Vagina (tissue), 2 donors: ENCODE measurements at regions of chr6 and their contacts with region 1.

Region 1: DNA sequence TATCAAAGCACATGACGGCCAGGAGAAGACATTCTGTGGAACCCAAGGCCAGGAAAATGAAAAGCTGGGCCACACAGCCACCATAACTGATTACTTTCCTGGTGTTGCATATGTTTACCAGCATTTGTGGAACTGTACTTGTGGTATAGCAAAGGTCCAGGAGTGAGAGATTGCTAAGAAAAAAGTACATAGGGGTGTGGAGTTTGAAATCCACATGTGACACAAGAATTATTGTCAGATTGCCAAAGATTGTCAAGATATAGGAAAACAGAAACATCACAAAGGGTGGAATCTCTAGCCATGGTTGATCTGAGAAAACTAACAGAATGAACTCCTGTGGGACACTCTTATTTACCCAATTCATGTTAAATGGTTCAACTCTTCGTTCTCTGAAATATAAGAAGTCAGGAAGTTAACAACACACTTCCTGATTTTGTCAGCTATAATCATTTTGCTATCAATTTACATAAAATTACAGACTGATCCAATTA is at the start of gene OR2B2:
- DNase-seq: no peak
- H3K4me3 ChIP-seq: no peak within 1 kb of the TSS
- H3K27ac ChIP-seq: no peak within 1 kb of the TSS
- H3K4me1 ChIP-seq: no peaks in the 10 kb centered on the region
- H3K27me3 ChIP-seq: no peaks in the 10 kb centered on the region
- CTCF ChIP-seq: no peak
- POLR2A ChIP-seq: no peak
- total RNA-seq, gene OR2B2: not detected

Region 2: GRCh38 chr6:25981568-25982263 is 1930.3 kb before region 1 on chr6:
- intact Hi-C with region 1: no loop called
- DNase-seq: no peak
- H3K4me3 ChIP-seq: no peak overlapping the region
- H3K27ac ChIP-seq: no peak overlapping the region
- H3K4me1 ChIP-seq: no peaks in the 10 kb centered on the region
- H3K27me3 ChIP-seq: no peaks in the 10 kb centered on the region
- CTCF ChIP-seq: no peak
- POLR2A ChIP-seq: no peak

Region 3: DNA sequence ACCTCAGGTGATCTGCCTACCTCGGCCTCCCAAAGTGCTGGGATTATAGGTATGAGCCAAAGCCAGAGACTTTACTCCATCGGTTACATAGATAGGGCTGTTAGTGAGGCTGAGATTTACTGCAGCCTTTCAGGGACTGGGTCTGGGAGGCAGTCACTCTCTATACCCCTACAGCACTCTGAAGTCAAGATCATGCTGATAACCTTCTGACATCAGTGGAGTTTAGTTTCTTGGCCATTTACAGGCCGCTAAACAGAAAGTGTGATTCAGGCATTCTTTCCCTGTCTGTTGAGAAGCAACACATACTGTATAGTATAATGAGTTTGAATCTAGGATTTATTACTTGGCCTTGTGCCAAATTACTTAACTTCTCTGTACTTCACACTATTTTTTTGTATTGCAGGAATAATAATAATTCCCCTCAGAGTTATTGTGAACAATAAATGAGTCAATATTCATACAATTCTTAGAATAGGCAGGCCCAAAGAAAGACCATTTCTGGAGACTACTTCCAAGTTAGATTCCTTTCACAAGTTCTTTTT is 519.4 kb before region 1 on chr6:
- intact Hi-C with region 1: loop called (anchors 5 kb)
- DNase-seq: no peak
- H3K4me3 ChIP-seq: no peak overlapping the region
- H3K27ac ChIP-seq: no peak overlapping the region
- H3K4me1 ChIP-seq: peaks cover 15% of the 10 kb centered on the region
- H3K27me3 ChIP-seq: no peaks in the 10 kb centered on the region
- CTCF ChIP-seq: no peak
- POLR2A ChIP-seq: no peak

Region 4: DNA sequence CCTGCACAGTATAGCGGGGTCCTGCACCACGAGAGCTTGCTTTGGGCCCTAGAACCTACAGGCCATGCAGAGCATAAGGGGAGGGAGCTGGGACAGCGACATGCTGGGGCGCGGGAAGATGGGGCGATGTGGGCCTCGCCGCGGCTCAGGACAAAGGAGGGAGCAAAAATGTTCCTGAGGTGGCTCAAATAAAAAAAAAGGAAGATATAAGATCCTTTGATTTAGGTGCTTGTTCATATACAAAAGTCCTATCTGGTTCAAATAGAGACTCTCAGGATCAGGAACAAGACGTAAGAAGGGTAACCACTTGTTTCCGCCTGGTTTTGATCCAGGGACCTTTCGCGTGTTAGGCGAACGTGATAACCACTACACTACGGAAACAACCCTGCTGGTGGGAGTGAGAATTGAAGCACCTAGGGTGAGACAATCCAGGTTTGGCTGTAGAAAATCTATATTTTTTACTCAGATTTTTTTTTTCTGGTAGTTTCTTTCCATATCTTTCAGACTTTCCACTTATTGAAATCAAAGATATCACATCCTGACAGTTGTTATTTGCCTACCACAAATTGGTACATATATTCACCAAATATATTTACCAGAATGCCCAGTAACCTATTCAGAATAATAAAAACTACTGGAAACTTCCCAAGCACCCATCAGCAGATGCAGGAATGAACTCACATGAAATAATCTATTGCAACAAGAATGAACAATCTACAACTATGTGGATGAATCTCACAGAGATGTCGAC is 261.2 kb before region 1 on chr6:
- intact Hi-C with region 1: no loop called
- DNase-seq: no peak
- H3K4me3 ChIP-seq: no peak overlapping the region
- H3K27ac ChIP-seq: no peak overlapping the region
- H3K4me1 ChIP-seq: no peaks in the 10 kb centered on the region
- H3K27me3 ChIP-seq: no peaks in the 10 kb centered on the region
- CTCF ChIP-seq: no peak
- POLR2A ChIP-seq: no peak